ENCODE measurements at regions of chr5 and their contacts with region 1.

Region 1: DNA sequence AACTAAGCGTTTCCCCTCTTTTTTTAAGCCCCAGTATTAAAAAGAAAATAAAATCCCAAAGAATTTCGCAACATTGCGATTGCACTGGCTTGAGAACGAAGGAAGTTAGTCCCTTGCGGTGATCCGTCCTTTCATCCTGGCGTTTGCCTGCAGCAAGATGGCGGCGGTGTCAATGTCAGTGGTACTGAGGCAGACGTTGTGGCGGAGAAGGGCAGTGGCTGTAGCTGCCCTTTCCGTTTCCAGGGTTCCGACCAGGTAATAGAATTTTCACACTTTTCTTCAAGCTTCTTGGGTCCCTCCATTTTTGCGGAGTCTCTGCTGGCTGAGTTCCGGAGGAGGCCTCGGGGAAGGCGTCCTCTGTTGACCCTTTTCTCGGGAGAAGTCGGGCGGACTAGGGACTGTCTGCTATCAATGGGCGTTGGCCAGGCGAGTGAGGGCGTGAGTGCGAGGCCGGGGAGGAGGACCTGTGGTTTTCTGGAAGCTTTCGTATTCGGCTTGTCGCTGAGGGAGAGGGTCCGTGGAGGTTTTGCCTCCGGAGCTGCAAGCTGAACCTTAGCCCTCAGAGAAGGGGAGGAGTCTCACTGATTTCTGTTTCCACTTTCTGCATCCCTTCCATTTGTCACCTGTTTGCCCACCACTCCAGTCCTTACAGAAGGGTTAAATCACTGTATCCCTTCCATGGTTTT is at the start of gene NDUFS4:
- DNase-seq: peak; percentile 83
- ATAC-seq: peak; percentile 93
- H3K4me3 ChIP-seq: peak within 1 kb of the TSS; percentile 83 to 93 (median 90)
- H3K4me3 Mint-ChIP-seq: peak within 1 kb of the TSS; percentile 99
- H3K27ac ChIP-seq: peak within 1 kb of the TSS; percentile 71 to 80
- H3K27ac Mint-ChIP-seq: peak within 1 kb of the TSS; percentile 96
- H3K4me1 ChIP-seq: peaks cover 10 to 20% of the 10 kb centered on the region in 2 donors
- H3K4me1 Mint-ChIP-seq: peaks cover 39% of the 10 kb centered on the region
- H3K27me3 ChIP-seq: peaks cover 0 to 10% (median 2%) of the 10 kb centered on the region in 4 experiments
- H3K27me3 Mint-ChIP-seq: peaks cover 28% of the 10 kb centered on the region
- CTCF ChIP-seq: no peak
- total RNA-seq, gene NDUFS4: 23.7 and 24.0 TPM in 2 replicates

Region 2: DNA sequence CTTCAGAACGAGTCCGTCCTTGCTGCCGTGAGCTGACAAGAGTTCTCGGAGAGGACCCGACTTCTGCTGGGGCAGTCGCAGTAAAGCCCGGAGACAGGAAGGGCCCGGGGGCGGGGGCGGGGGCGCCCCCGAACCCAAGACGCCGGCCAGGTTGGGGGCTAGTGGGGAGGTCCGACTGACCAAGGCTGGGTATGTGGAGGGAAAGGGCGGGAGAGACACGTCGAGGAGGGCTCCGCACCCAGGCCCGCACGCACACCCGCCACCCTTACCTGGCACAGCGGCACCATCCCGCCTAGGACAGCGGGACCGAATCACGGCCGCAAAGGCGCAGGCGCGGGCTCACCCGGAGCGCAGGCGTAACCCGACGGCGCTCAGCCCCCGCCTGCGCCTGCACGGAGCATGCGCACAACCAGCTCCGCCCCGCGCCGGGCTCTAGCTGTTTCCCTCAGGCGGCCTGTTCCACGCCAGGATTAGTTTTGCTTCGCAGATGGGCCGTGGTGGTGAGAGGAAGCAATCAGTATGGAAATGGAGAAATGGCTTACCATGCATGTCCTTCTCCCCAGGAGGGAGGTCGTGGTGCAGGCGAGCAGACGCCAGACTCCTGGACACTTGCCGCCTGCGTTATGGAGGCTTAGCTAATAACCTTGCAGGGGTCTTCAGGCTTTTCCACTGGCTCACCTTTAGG is 451.1 kb before region 1 on chr5 and contains the start of gene MOCS2:
- CTCF ChIA-PET with region 1: no interaction called
- POLR2A ChIA-PET with region 1: no interaction called
- intact Hi-C with region 1: loop called (anchors 5 kb)
- DNase-seq: peak; percentile 93
- ATAC-seq: peak; percentile 96
- H3K4me3 ChIP-seq: peak within 1 kb of the TSS; percentile 65 to 84 (median 79)
- H3K4me3 Mint-ChIP-seq: peak within 1 kb of the TSS; percentile 98
- H3K27ac ChIP-seq: peak within 1 kb of the TSS; percentile 71 to 78
- H3K27ac Mint-ChIP-seq: peak within 1 kb of the TSS; percentile 92
- H3K4me1 ChIP-seq: peaks cover 9 to 11% of the 10 kb centered on the region in 2 donors
- H3K4me1 Mint-ChIP-seq: peaks cover 44% of the 10 kb centered on the region
- H3K27me3 ChIP-seq: no peaks in the 10 kb centered on the region
- H3K27me3 Mint-ChIP-seq: no peaks in the 10 kb centered on the region
- CTCF ChIP-seq: no peak
- total RNA-seq, gene MOCS2: 14.9 and 15.3 TPM in 2 replicates